ENCODE measurements at regions of chr10 and their contacts with region 1.

Region 1: DNA sequence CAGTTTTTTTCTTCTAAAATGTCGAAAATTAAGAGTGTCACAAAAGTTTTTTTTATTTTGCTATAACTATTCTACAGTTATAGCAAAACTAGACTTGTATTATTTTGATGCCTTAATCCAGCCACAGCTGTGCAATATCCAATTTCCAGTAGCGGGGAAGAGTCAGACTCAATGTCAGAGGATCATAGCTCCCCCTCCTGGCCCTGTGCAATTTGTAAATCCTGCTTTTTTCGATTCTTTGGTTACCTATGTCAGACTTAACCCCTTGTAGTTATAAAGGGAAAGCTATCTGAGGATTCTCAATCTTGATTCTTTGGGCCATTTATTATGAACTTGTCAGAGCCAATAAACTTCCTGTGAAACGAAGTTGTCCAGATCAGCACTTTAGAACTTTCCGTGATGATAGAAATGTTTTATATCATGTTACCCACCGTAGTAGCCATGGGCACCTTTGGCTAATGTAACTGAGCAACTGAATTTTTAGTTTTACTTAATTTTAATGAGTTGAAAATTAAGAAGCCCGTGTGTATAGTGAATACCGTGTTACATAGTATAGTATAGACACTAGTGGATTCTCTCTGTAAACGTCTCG is 87.7 kb upstream of the PRKCQ start:
- DNase-seq: peak in 1 of 2 donors; percentile 13
- ATAC-seq: no peak
- H3K4me3 ChIP-seq: no peak overlapping the region
- H3K27ac ChIP-seq: no peak overlapping the region
- H3K4me1 ChIP-seq: peaks cover 0 to 13% (median 5%) of the 10 kb centered on the region in 9 donors
- H3K27me3 ChIP-seq: peaks cover 0 to 29% (median 10%) of the 10 kb centered on the region in 7 donors
- CTCF ChIP-seq: peak in 7 of 9 donors; percentile 29 to 60 (median 44)

Region 2: GRCh38 chr10:6416892-6417512 is 250.8 kb before region 1 on chr10:
- intact Hi-C with region 1: loop called in 9 of 10 experiments (anchors 5 to 10 kb)
- DNase-seq: no peak
- ATAC-seq: peak in 4 of 8 donors; percentile 41 to 70 (median 50)
- H3K4me3 ChIP-seq: no peak overlapping the region
- H3K27ac ChIP-seq: no peak overlapping the region
- H3K4me1 ChIP-seq: no peaks in the 10 kb centered on the region
- H3K27me3 ChIP-seq: peaks cover 0 to 8% (median 0%) of the 10 kb centered on the region in 7 donors
- CTCF ChIP-seq: peak in 8 of 9 donors; percentile 33 to 73 (median 65)

Region 3: GRCh38 chr10:6478722-6479121 is 189.1 kb before region 1 on chr10:
- intact Hi-C with region 1: no loop called
- DNase-seq: no peak
- ATAC-seq: no peak
- H3K4me3 ChIP-seq: no peak overlapping the region
- H3K27ac ChIP-seq: no peak overlapping the region
- H3K4me1 ChIP-seq: peaks cover 0 to 20% (median 0%) of the 10 kb centered on the region in 9 donors
- H3K27me3 ChIP-seq: peaks cover 0 to 3% (median 0%) of the 10 kb centered on the region in 7 donors
- CTCF ChIP-seq: no peak